ENCODE measurements at regions of chr7 and their contacts with region 1.

Region 1: DNA sequence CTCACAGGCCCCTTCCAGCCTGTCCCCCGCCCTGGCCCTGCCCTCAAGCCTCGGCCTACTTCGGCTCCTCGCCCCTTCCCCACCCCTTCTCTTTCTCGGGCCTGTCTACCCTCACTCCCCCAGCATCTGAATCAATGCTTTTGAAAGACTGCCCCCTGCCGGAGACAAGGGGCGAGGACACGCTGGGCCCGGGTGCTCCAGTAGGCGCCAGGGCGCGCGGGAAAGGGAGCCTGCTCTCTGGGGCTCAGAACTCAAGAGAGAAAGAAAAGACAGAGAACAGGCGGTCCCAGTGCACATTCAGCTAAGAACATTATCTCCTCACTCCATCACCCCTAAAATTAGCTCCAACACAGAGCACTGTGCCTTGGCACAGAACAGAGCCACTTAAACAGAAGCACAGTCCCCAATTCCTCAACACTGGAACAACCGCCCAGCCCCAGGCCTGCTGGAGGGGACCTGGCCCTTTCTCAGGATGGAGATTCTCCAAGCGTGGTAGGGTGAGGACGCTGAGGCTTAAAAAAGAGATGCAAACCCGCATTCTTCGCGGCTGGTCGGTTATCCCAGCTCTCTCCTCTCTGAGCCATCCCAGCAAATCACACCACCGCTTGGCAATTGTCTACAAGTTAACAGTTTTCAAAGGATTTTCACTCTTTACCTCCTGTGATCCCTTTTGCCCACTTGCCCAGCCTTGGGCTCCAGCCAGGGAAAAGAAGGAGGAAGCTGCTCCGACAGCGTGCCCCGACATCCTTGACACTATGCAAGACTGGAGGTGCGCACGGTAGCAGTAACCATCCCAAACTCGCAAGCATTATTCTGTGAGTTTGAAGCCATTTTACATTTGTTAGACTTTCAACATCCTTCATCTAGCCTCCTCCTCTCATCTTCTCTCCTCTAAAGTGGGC is 2.1 kb downstream of the GIGYF1 start:
- DNase-seq: peak; percentile 91
- H3K4me3 Mint-ChIP-seq: peak overlapping the region; percentile 98
- H3K27ac Mint-ChIP-seq: no peak overlapping the region
- H3K4me1 Mint-ChIP-seq: peaks cover 53% of the 10 kb centered on the region
- H3K27me3 Mint-ChIP-seq: no peaks in the 10 kb centered on the region

Region 2: DNA sequence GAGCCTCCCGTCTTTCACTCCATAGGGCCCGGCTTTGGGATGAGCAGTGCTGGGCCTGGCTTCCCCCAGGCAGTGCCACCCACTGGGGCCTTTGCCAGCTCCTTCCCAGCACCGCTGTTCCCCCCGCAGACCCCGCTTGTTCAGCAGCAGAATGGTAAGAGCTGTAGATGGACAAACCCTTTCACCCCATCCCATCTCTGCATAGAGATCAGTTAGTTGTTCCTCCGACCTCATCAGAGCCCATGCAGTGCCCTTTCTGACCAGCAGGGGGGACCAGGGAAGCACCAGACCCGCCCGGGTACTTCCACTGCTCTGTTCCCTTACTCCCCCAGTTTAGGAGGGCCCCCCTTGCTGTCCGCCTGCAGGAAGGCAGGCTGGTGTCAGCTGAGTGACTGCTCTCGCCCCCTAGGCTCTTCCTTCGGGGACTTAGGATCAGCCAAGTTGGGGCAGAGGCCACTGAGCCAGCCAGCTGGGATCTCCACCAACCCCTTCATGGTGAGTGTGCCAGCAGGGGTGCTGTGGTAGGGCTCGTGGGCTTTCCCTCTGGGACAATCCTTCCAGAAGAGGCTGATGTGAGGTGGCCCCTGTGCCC is 128.0 kb before region 1 on chr7:
- CTCF ChIA-PET with region 1: interaction called, 20 read pairs
- intact Hi-C with region 1: loop called (anchors 1 kb)
- DNase-seq: peak; percentile 90
- H3K4me3 Mint-ChIP-seq: no peak overlapping the region
- H3K27ac Mint-ChIP-seq: no peak overlapping the region
- H3K4me1 Mint-ChIP-seq: peaks cover 15% of the 10 kb centered on the region
- H3K27me3 Mint-ChIP-seq: no peaks in the 10 kb centered on the region

Region 3: GRCh38 chr7:100611974-100612729 is 79.8 kb before region 1 on chr7 and contains the start of gene MOSPD3:
- CTCF ChIA-PET with region 1: interaction called, 20 read pairs
- intact Hi-C with region 1: loop called (anchors 1 kb)
- DNase-seq: peak; percentile 99
- H3K4me3 Mint-ChIP-seq: peak within 1 kb of the TSS; percentile 98
- H3K27ac Mint-ChIP-seq: peak within 1 kb of the TSS; percentile 99
- H3K4me1 Mint-ChIP-seq: peaks cover 13% of the 10 kb centered on the region
- H3K27me3 Mint-ChIP-seq: no peaks in the 10 kb centered on the region
- total RNA-seq, gene MOSPD3: 12.3 to 13.0 TPM

Region 4: GRCh38 chr7:100632951-100633717 is 58.8 kb before region 1 on chr7:
- CTCF ChIA-PET with region 1: interaction called, 38 read pairs
- intact Hi-C with region 1: loop called (anchors 1 kb)
- DNase-seq: peak; percentile 71
- H3K4me3 Mint-ChIP-seq: peak overlapping the region; percentile 80
- H3K27ac Mint-ChIP-seq: peak overlapping the region; percentile 76
- H3K4me1 Mint-ChIP-seq: peaks cover 22% of the 10 kb centered on the region
- H3K27me3 Mint-ChIP-seq: no peaks in the 10 kb centered on the region

Region 5: DNA sequence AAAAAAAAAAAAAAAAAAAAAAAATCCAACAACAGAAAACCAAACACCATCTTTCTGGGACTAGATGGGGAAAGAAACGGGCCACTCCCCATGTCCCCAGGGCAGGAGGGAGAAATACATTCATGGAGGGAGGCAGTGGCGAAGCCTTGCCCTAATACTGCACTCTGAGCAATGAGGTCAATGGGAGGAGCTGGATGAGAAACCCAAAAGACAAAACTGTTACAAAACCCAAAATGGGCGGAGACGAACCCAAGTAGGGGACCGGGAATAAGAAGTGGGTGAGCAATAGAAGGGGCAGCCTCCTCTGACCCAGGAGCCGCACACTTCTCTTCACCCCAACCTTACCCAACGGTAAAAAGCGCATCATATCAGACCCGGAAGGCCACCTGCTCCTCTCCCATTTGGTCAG is 11.8 kb before region 1 on chr7:
- CTCF ChIA-PET with region 1: interaction called, 43 read pairs
- intact Hi-C with region 1: loop called (anchors 1 kb)
- DNase-seq: no peak
- H3K4me3 Mint-ChIP-seq: no peak overlapping the region
- H3K27ac Mint-ChIP-seq: peak overlapping the region; percentile 50
- H3K4me1 Mint-ChIP-seq: peaks cover 25% of the 10 kb centered on the region
- H3K27me3 Mint-ChIP-seq: no peaks in the 10 kb centered on the region

Region 6: GRCh38 chr7:100852048-100852872 is 160.3 kb after region 1 on chr7 and contains the start of gene SLC12A9:
- CTCF ChIA-PET with region 1: interaction called, 7 read pairs
- intact Hi-C with region 1: loop called (anchors 5 kb)
- DNase-seq: peak; percentile 89
- H3K4me3 Mint-ChIP-seq: peak within 1 kb of the TSS; percentile 89
- H3K27ac Mint-ChIP-seq: peak within 1 kb of the TSS; percentile 50
- H3K4me1 Mint-ChIP-seq: peaks cover 18% of the 10 kb centered on the region
- H3K27me3 Mint-ChIP-seq: no peaks in the 10 kb centered on the region
- total RNA-seq, gene SLC12A9: 10.1 to 10.5 TPM